Activated CD4-positive, alpha-beta T cell treated with anti-CD3 and anti-CD28 coated beads, Interleukin-2, amount 10 ng/mL, durations not matched to agents 24 days and 14 days (primary cell): ENCODE measurements at regions of chr21 and their contacts with region 1.

Region 1: DNA sequence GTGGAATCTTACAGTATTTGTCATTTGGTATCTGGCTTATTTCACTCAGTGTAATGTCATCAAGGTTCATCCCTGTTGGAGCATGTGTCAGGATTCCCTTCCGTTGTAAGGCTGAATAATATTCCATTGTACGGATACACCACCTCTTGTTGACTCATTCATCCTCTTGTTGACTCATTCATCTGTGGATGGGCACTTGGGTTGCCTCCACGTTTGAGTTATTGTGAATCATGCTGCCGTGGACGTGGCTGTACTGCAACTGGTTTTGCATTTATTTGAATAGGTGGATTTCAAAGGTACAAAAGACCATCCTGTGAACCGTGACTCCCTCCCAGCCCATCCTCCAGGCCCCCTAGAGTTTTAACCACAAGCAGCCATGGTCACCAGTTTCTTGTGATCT is 11.9 kb upstream of the TCP10L start:
- DNase-seq: no peak
- H3K4me3 Mint-ChIP-seq: no peak overlapping the region
- H3K27ac Mint-ChIP-seq: peak overlapping the region; percentile 10
- H3K4me1 Mint-ChIP-seq: peaks cover 6% of the 10 kb centered on the region
- H3K27me3 Mint-ChIP-seq: no peaks in the 10 kb centered on the region

Region 2: DNA sequence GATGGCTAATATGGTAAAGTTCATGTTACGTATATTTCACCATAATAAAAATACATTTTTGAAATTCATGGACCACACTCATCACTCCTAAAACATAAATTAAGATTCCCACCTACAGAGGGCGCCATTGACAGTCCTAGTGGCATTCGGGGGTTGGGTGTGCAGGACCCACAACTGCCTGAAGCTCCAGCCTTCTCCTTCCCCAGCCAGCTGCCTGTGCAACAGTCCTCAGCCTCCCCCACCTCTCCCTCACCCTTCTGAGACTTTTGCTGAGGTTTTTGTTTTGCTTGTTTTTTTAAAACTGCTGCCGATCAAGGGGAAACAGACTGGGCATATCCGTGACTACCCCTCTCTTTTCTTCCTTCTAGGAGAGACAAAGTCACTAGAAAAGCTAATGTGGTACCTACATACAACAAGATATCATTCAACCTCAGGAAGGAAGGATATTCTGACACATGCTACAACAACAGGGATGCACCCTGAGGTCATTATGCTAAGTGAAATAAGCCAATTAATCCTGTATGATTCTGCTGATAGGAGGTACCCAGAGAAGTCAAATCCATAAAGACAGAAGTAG is 193.9 kb before region 1 on chr21:
- intact Hi-C with region 1: loop called (anchors 1 kb)
- DNase-seq: peak; percentile 88
- H3K4me3 Mint-ChIP-seq: no peak overlapping the region
- H3K27ac Mint-ChIP-seq: no peak overlapping the region
- H3K4me1 Mint-ChIP-seq: peaks cover 7% of the 10 kb centered on the region
- H3K27me3 Mint-ChIP-seq: peaks cover 18% of the 10 kb centered on the region